B cell (primary cell): ENCODE measurements at regions of chr22 and their contacts with region 1.

Region 1: DNA sequence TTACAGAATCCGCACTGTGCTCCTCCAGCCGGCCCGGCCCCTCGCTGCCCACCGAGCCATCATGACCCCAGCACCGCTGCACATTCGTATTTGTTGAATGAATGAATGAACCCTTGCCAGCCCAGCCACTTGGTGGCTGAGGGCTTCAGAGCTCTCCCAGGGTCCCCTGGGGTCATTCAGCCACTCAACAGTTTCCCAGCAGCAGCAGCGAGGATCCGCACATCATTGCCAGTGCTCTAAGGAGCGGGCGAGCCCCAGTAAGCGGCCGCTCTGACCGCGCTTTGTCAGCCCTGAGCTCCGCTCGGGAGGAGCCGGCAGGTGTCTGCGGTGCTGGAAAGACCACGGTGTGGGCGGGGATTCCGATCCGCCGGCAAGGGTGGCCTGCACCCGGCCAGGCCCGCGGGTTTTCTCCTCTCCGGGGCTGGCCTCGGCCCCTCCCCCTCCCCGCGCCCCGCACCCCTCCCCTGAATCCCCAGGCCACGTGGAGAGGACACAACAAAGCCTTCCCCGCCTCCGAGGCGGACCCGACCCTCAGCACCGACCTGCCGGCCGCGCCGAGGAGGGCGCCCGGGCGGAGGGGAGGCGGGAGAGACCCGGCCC is 563 bp downstream of the BID start:
- DNase-seq: peak; percentile 73
- ATAC-seq: peak; percentile 35
- H3K4me3 ChIP-seq: peak overlapping the region; percentile 2 to 78 (median 62)
- H3K4me3 Mint-ChIP-seq: peak overlapping the region; percentile 87
- H3K27ac ChIP-seq: peak overlapping the region; percentile 57 to 86
- H3K27ac Mint-ChIP-seq: peak overlapping the region; percentile 93
- H3K4me1 ChIP-seq: peaks cover 61 to 86% of the 10 kb centered on the region in 2 donors
- H3K4me1 Mint-ChIP-seq: peaks cover 73% of the 10 kb centered on the region
- H3K27me3 ChIP-seq: no peaks in the 10 kb centered on the region
- H3K27me3 Mint-ChIP-seq: no peaks in the 10 kb centered on the region
- CTCF ChIP-seq: no peak

Region 2: DNA sequence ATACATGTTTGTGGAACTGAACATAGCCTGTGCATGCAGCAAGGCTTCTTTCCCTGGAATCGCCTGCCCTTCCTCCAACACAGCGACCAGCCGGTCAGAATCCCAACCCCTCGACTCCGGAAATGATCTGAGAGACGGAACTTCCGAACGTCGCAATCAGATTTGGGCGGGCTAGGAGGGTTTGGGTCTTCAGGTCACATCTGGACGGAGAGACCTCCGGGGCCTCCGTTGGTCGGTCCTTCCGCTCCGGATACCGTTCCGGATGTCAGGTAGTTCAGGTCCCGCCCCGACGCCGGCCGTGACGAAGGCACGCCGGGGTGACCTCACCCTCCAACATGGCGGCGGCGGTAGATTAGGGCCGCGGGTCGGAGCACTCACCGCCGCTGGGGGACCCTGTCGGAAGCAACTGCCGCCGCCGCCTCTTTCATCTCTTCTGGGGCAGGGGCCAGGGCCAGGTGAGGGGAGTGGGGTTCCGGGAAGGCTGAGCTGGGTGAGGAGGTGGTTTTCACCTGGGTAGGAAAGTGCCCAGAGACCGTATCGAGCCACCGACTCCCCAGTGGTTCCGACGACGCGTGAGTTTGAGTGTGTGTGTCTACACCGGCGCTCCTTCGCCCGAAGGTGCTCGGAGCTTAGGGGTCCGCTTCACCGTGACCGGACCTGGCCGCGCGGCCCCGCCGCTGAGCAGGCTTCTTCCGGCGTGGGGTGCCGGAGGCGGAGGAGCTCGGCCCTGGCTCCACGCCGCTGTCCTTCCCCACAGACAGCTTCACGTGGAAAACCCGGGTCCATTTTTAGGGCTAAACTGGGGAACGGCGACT is 135.1 kb before region 1 on chr22 and contains the start of gene BCL2L13:
- CTCF ChIA-PET with region 1: no interaction called
- POLR2A ChIA-PET with region 1: no interaction called
- intact Hi-C with region 1: loop called (anchors 2 kb)
- DNase-seq: peak; percentile 94
- ATAC-seq: peak; percentile 94
- H3K4me3 ChIP-seq: peak within 1 kb of the TSS; percentile 67 to 100 (median 81)
- H3K4me3 Mint-ChIP-seq: peak within 1 kb of the TSS; percentile 96
- H3K27ac ChIP-seq: peak within 1 kb of the TSS; percentile 100
- H3K27ac Mint-ChIP-seq: peak within 1 kb of the TSS; percentile 97
- H3K4me1 ChIP-seq: peaks cover 15 to 20% of the 10 kb centered on the region in 2 donors
- H3K4me1 Mint-ChIP-seq: peaks cover 28% of the 10 kb centered on the region
- H3K27me3 ChIP-seq: no peaks in the 10 kb centered on the region
- H3K27me3 Mint-ChIP-seq: no peaks in the 10 kb centered on the region
- CTCF ChIP-seq: no peak
- total RNA-seq, gene BCL2L13: 29.9 and 37.2 TPM in 2 replicates

Region 3: DNA sequence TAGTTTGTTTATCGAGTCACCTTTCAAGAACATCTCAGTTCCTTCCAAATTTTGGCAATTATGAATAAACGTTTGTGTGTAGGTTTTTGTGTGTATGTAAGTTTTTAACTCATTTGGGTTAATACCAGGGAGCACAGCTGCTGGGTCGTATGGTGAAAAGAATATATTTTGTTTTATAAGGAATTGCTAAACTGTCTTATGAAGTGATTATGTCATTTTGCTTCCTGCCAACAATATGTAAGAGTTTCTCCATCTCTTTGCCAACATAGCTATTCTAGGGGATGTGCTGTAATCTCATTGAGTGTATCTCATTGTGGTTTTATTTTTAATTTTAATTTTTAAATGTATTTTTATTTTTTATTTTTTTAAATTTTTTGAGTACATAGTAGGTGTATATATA is 107.9 kb before region 1 on chr22:
- CTCF ChIA-PET with region 1: no interaction called
- POLR2A ChIA-PET with region 1: no interaction called
- intact Hi-C with region 1: no loop called
- DNase-seq: no peak
- ATAC-seq: no peak
- H3K4me3 ChIP-seq: no peak overlapping the region
- H3K4me3 Mint-ChIP-seq: no peak overlapping the region
- H3K27ac ChIP-seq: no peak overlapping the region
- H3K27ac Mint-ChIP-seq: no peak overlapping the region
- H3K4me1 ChIP-seq: peaks cover 0 to 5% of the 10 kb centered on the region in 2 donors
- H3K4me1 Mint-ChIP-seq: peaks cover 6% of the 10 kb centered on the region
- H3K27me3 ChIP-seq: no peaks in the 10 kb centered on the region
- H3K27me3 Mint-ChIP-seq: no peaks in the 10 kb centered on the region
- CTCF ChIP-seq: no peak

Region 4: DNA sequence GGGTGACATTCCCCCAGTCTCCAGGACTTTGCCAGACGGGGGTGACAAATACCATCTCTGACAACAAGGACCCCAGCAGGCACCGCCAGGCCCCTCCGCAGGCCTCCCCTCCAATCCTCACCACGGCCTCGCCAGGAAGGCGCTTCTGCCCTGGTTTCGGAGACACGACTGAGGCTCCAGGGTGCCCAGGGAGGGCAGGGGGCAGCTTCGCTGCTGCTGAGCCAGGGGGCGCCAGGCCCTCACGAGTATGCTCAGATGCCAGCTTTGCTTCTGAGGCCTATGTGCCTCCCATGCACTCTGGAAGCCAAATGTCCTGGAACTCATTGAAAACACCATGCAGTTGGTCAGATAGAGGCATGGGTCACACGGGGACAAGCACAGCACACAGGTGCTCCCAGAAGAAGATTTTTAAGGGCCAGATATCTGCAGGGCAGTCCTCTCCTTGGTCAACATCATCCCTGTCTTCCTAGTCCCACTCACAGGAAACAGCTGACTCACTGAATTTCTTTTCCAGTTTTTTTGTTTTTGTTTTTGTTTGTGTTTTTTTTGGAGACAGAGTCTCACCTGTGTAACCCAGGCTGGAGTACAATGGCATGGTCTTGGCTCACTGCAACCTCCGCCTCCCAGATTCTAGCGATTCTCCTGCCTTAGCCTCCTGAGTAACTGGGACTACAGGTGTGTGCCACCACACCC is 19.3 kb before region 1 on chr22:
- CTCF ChIA-PET with region 1: interaction called, 10 read pairs
- POLR2A ChIA-PET with region 1: interaction called, 4 read pairs
- intact Hi-C with region 1: no loop called
- DNase-seq: peak; percentile 42
- ATAC-seq: peak; percentile 43
- H3K4me3 ChIP-seq: no peak overlapping the region
- H3K4me3 Mint-ChIP-seq: no peak overlapping the region
- H3K27ac ChIP-seq: no peak overlapping the region
- H3K27ac Mint-ChIP-seq: no peak overlapping the region
- H3K4me1 ChIP-seq: no peaks in the 10 kb centered on the region
- H3K4me1 Mint-ChIP-seq: no peaks in the 10 kb centered on the region
- H3K27me3 ChIP-seq: no peaks in the 10 kb centered on the region
- H3K27me3 Mint-ChIP-seq: no peaks in the 10 kb centered on the region
- CTCF ChIP-seq: peak; percentile 35

Region 5: GRCh38 chr22:17797721-17798559 is 24.2 kb after region 1 on chr22:
- CTCF ChIA-PET with region 1: interaction called, 12 read pairs
- POLR2A ChIA-PET with region 1: interaction called, 14 read pairs
- intact Hi-C with region 1: loop called (anchors 1 kb)
- DNase-seq: peak; percentile 90
- ATAC-seq: peak; percentile 58
- H3K4me3 ChIP-seq: no peak overlapping the region
- H3K4me3 Mint-ChIP-seq: peak overlapping the region; percentile 73
- H3K27ac ChIP-seq: peak overlapping the region; percentile 63 to 76
- H3K27ac Mint-ChIP-seq: peak overlapping the region; percentile 93
- H3K4me1 ChIP-seq: peaks cover 56 to 73% of the 10 kb centered on the region in 2 donors
- H3K4me1 Mint-ChIP-seq: peaks cover 72% of the 10 kb centered on the region
- H3K27me3 ChIP-seq: no peaks in the 10 kb centered on the region
- H3K27me3 Mint-ChIP-seq: no peaks in the 10 kb centered on the region
- CTCF ChIP-seq: no peak